ENCODE measurements at regions of chr17 and their contacts with region 1.

Region 1: DNA sequence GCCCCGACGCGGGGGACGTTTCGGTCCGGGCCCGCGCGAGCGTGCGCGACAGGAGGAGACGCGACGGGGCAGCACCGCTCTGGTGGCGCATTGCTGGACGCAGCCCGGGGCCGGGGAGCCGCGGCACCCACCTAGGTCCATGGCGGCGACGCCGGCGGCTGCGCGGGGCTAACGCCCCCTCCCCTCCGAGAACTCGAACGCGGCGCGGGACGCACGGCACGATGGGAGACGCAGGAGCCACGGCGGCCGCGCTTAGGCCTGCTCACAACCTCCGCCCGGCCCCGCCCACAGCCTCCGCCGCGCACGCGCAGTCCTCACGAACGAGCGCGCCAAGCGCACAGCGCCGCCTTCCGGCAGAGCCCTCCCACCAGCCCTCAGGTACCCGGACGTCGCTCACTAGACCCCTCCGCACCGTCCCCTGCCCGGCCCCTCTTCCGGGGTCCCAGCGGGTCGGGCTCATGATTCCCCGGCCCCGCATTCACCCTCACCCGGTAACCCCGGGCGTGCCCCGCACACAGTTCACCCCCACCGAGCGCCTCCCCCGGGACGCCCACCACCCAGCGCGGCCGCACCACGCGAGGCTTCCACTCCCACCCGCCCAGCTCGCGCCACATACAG is at the start of gene GEMIN4:
- DNase-seq: peak; percentile 98
- ATAC-seq: peak; percentile 88
- H3K4me3 ChIP-seq: peak within 1 kb of the TSS; percentile 66 to 89 (median 81)
- H3K4me3 Mint-ChIP-seq: peak within 1 kb of the TSS; percentile 96
- H3K27ac ChIP-seq: peak within 1 kb of the TSS; percentile 59 to 87
- H3K27ac Mint-ChIP-seq: peak within 1 kb of the TSS; percentile 96
- H3K4me1 ChIP-seq: peaks cover 18 to 27% of the 10 kb centered on the region in 2 donors
- H3K4me1 Mint-ChIP-seq: peaks cover 38% of the 10 kb centered on the region
- H3K27me3 ChIP-seq: no peaks in the 10 kb centered on the region
- H3K27me3 Mint-ChIP-seq: no peaks in the 10 kb centered on the region
- CTCF ChIP-seq: peak; percentile 88
- total RNA-seq, gene GEMIN4: 25.6 and 26.6 TPM in 2 replicates

Region 2: GRCh38 chr17:409848-410545 is 342.1 kb before region 1 on chr17:
- CTCF ChIA-PET with region 1: interaction called, 7 read pairs
- POLR2A ChIA-PET with region 1: no interaction called
- intact Hi-C with region 1: loop called (anchors 2 kb)
- DNase-seq: peak; percentile 100
- ATAC-seq: peak; percentile 82
- H3K4me3 ChIP-seq: peak overlapping the region; percentile 31 to 92 (median 75)
- H3K4me3 Mint-ChIP-seq: peak overlapping the region; percentile 92
- H3K27ac ChIP-seq: peak overlapping the region; percentile 61 to 88
- H3K27ac Mint-ChIP-seq: peak overlapping the region; percentile 97
- H3K4me1 ChIP-seq: peaks cover 20 to 22% of the 10 kb centered on the region in 2 donors
- H3K4me1 Mint-ChIP-seq: peaks cover 39% of the 10 kb centered on the region
- H3K27me3 ChIP-seq: peaks cover 0 to 6% (median 2%) of the 10 kb centered on the region in 4 experiments
- H3K27me3 Mint-ChIP-seq: peaks cover 9% of the 10 kb centered on the region
- CTCF ChIP-seq: no peak

Region 3: GRCh38 chr17:716238-716637 is 35.9 kb before region 1 on chr17:
- CTCF ChIA-PET with region 1: interaction called, 12 read pairs
- POLR2A ChIA-PET with region 1: interaction called, 15 read pairs
- intact Hi-C with region 1: loop called (anchors 1 kb)
- DNase-seq: no peak
- ATAC-seq: no peak
- H3K4me3 ChIP-seq: no peak overlapping the region
- H3K4me3 Mint-ChIP-seq: peak overlapping the region; percentile 45
- H3K27ac ChIP-seq: no peak overlapping the region
- H3K27ac Mint-ChIP-seq: no peak overlapping the region
- H3K4me1 ChIP-seq: peaks cover 4 to 20% of the 10 kb centered on the region in 2 donors
- H3K4me1 Mint-ChIP-seq: peaks cover 24% of the 10 kb centered on the region
- H3K27me3 ChIP-seq: no peaks in the 10 kb centered on the region
- H3K27me3 Mint-ChIP-seq: no peaks in the 10 kb centered on the region
- CTCF ChIP-seq: no peak

Region 4: GRCh38 chr17:732067-732901 is 19.8 kb before region 1 on chr17 and contains the start of gene TLCD3A:
- CTCF ChIA-PET with region 1: interaction called, 3 read pairs
- POLR2A ChIA-PET with region 1: no interaction called
- intact Hi-C with region 1: loop called (anchors 2 kb)
- DNase-seq: peak; percentile 59
- ATAC-seq: peak; percentile 78
- H3K4me3 ChIP-seq: peak within 1 kb of the TSS in 4 of 5 experiments; percentile 47 to 57 (median 56)
- H3K4me3 Mint-ChIP-seq: peak within 1 kb of the TSS; percentile 88
- H3K27ac ChIP-seq: no peak within 1 kb of the TSS
- H3K27ac Mint-ChIP-seq: peak within 1 kb of the TSS; percentile 79
- H3K4me1 ChIP-seq: peaks cover 9 to 10% of the 10 kb centered on the region in 2 donors
- H3K4me1 Mint-ChIP-seq: peaks cover 10% of the 10 kb centered on the region
- H3K27me3 ChIP-seq: peaks cover 0 to 27% (median 12%) of the 10 kb centered on the region in 4 experiments
- H3K27me3 Mint-ChIP-seq: no peaks in the 10 kb centered on the region
- CTCF ChIP-seq: no peak
- total RNA-seq, gene TLCD3A: 2.4 and 3.4 TPM in 2 replicates

Region 5: DNA sequence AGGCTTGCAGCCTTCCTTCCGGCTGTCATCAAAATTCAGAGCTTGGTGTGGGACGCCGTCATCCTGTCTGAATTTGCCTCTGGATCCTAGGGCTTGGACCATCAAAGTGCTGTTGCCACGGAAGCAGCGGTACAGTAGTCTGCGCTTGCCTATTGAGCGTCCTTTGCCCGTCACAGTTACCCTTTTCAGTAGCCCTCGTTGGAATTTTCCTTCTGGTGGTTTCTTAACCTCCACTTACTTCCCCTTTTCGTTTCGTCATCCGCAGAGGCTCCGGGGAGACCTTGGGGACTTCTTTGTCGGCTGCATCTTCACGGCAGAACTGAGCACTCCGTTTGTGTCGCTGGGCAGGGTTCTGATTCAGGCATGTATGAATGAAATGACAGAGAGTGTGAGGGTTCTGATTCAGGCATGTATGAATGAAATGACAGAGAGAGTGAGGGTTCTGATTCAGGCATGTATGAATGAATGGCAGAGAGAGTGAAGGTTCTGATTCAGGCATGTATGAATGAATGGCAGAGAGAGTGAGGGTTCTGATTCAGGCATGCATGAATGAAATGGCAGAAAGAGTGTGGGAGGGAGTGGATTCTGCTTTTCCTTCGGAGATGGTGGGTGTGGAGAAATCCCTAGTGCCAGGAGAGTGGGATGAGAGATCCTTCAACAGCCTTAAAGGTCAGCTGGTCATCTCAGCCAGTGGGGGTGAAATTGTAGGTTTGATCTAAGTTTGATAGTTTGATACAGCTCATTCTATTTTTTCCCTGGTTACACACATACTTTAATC is 11.7 kb before region 1 on chr17:
- CTCF ChIA-PET with region 1: interaction called, 6 read pairs
- POLR2A ChIA-PET with region 1: no interaction called
- intact Hi-C with region 1: loop called (anchors 1 kb)
- DNase-seq: peak; percentile 91
- ATAC-seq: peak; percentile 94
- H3K4me3 ChIP-seq: peak overlapping the region; percentile 15 to 47 (median 33)
- H3K4me3 Mint-ChIP-seq: peak overlapping the region; percentile 65
- H3K27ac ChIP-seq: peak overlapping the region; percentile 70
- H3K27ac Mint-ChIP-seq: peak overlapping the region; percentile 94
- H3K4me1 ChIP-seq: peaks cover 14 to 18% of the 10 kb centered on the region in 2 donors
- H3K4me1 Mint-ChIP-seq: peaks cover 15% of the 10 kb centered on the region
- H3K27me3 ChIP-seq: no peaks in the 10 kb centered on the region
- H3K27me3 Mint-ChIP-seq: no peaks in the 10 kb centered on the region
- CTCF ChIP-seq: no peak

Region 6: DNA sequence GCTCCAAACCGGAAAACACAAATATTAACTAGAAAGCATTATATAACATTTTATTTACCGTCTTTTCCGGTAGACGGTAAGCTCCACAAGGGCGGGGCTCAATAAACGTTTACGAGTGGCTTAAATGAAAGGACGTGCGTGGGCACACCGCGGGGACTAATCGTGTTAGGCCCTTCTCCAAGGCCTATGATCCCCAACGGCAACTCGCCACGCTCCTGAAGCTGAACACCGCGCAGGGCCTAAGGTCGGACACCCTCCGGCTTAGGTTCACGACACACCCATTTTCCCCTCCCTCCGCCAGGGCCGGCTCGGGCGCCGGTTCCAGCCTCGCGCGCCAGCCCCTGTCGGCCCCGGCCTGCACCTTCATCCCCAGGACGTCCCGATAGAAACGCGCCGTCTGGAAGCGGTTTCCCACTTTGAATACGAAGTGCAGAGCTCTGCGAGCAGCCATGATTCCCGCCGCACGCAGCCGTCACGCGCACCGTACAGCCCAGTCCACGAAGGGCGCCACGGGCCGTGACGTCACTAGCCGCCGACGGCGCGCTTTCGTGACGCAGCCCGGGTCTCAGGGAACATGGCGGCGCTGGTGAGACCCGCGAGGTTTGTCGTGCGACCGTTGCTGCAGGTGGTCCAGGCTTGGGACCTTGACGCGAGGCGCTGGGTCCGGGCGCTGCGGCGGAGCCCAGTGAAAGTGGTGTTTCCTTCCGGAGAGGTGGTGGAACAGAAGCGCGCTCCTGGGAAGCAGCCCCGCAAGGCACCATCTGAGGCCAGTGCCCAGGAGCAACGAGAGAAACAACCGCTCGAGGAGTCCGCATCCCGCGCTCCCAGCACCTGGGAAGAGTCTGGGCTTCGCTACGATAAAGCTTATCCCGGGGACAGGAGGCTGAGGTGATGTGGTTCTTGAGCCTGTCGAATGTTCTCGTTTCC is 30.0 kb after region 1 on chr17 and contains the starts of genes GLOD4 and MRM3:
- CTCF ChIA-PET with region 1: interaction called, 6 read pairs
- POLR2A ChIA-PET with region 1: interaction called, 3 read pairs
- intact Hi-C with region 1: loop called (anchors 1 kb)
- DNase-seq: peak; percentile 96
- ATAC-seq: peak; percentile 95
- H3K4me3 ChIP-seq: peak within 1 kb of the TSS; percentile 79 to 100 (median 93)
- H3K4me3 Mint-ChIP-seq: peak within 1 kb of the TSS; percentile 97
- H3K27ac ChIP-seq: peak within 1 kb of the TSS; percentile 83 to 95
- H3K27ac Mint-ChIP-seq: peak within 1 kb of the TSS; percentile 97
- H3K4me1 ChIP-seq: peaks cover 16 to 20% of the 10 kb centered on the region in 2 donors
- H3K4me1 Mint-ChIP-seq: peaks cover 27% of the 10 kb centered on the region
- H3K27me3 ChIP-seq: no peaks in the 10 kb centered on the region
- H3K27me3 Mint-ChIP-seq: no peaks in the 10 kb centered on the region
- CTCF ChIP-seq: no peak
- total RNA-seq, gene GLOD4: 69.3 and 77.4 TPM in 2 replicates
- total RNA-seq, gene MRM3: 20.9 and 28.4 TPM in 2 replicates

Region 7: GRCh38 chr17:979538-980405 is 227.7 kb after region 1 on chr17 and contains the start of gene NXN:
- CTCF ChIA-PET with region 1: interaction called, 3 read pairs
- POLR2A ChIA-PET with region 1: no interaction called
- intact Hi-C with region 1: loop called (anchors 1 kb)
- DNase-seq: peak; percentile 90
- ATAC-seq: peak; percentile 88
- H3K4me3 ChIP-seq: peak within 1 kb of the TSS; percentile 8 to 67 (median 62)
- H3K4me3 Mint-ChIP-seq: peak within 1 kb of the TSS; percentile 87
- H3K27ac ChIP-seq: peak within 1 kb of the TSS in 1 of 2 donors; percentile 54
- H3K27ac Mint-ChIP-seq: peak within 1 kb of the TSS; percentile 80
- H3K4me1 ChIP-seq: peaks cover 23 to 28% of the 10 kb centered on the region in 2 donors
- H3K4me1 Mint-ChIP-seq: peaks cover 21% of the 10 kb centered on the region
- H3K27me3 ChIP-seq: peaks cover 0 to 33% (median 22%) of the 10 kb centered on the region in 4 experiments
- H3K27me3 Mint-ChIP-seq: peaks cover 23% of the 10 kb centered on the region
- CTCF ChIP-seq: no peak
- total RNA-seq, gene NXN: 0.17 TPM in 1 of 2 replicates, not detected in the other

Region 8: DNA sequence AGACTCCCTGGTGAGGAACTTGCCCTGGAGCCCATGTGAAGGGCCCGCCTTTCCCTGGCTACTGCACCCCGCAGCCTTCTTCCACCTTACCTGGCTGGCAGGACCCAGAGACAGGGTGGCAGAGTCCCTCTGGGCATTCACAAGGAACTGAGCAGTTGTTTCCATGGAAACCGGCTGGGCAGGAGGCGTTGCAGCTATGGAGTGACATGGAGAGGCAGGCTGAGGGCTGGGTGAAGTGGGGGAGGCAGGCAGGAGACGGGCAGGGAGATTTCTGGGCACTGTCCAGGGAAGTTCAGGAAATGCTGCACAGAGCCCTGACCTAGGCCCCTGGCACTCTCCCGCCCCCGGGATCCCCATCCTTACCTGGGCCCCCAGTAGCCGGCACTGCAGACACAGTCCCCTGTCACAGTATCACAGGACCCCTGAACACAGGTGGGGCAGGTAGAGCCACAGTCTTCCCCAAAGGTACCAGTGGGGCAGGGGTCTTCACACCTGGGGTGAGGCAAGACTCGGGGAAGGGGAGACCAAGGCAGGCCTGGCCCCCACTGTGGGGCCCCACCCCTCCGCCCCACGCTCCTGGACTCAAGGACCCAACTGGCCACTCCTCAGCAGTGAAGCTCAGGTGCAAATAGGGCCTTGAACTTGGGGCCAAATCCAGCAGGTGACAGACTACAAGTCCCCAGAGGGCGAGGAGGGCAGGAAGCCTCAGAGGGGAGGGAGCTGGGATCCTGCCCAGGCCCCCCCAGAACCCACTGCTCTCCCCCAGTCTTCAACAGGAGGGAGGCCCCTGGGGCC is 887.6 kb after region 1 on chr17:
- CTCF ChIA-PET with region 1: no interaction called
- POLR2A ChIA-PET with region 1: no interaction called
- intact Hi-C with region 1: no loop called
- DNase-seq: no peak
- ATAC-seq: no peak
- H3K4me3 ChIP-seq: no peak overlapping the region
- H3K4me3 Mint-ChIP-seq: no peak overlapping the region
- H3K27ac ChIP-seq: no peak overlapping the region
- H3K27ac Mint-ChIP-seq: peak overlapping the region; percentile 32
- H3K4me1 ChIP-seq: peaks cover 10 to 12% of the 10 kb centered on the region in 2 donors
- H3K4me1 Mint-ChIP-seq: peaks cover 10% of the 10 kb centered on the region
- H3K27me3 ChIP-seq: peaks cover 0 to 3% (median 0%) of the 10 kb centered on the region in 4 experiments
- H3K27me3 Mint-ChIP-seq: no peaks in the 10 kb centered on the region
- CTCF ChIP-seq: no peak

Measured in B cell (primary cell).